ENCODE measurements at regions of chr2 and their contacts with region 1.

Region 1: DNA sequence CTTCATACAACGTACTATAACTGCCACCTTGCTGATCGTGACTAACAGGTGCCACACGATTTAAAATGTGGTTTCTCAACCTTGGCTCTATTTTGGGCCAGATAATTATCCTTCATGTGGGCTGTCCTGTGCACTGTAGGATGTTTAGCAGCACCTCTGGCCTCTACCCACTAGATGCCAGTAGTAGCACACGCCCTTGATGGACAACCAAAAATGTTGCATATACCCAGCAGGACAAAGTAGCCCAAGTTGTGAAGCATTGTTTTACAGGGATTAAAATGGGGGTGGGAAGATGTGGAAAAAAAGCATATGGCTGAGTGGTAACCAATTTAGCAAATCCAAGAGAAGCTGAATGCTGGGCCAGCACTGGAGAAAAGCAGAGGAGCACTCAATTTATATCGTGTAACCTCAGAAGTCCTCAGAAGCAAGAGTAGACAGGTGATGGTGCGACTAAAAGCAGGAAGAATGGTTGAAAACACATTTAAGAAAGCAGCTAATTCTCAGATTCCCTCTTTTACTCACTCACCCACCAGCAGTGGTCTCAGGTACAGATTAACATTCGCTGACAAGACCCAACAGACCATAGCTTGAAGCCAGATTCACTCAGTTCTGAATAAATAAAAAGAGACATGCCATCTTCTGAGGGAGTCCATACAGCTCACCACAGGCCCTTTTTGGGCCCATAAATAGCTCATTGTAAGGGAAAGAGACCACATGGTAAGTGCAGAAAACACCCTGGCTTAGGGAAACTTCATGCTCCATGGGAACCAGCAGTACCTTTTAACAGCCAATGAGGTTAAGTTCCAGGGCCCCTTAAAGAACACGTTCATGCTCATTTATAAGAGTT is 50.6 kb downstream of the RAPH1 start:
- DNase-seq: no peak
- ATAC-seq: no peak
- H3K4me3 Mint-ChIP-seq: no peak overlapping the region
- H3K27ac Mint-ChIP-seq: no peak overlapping the region
- H3K4me1 Mint-ChIP-seq: no peaks in the 10 kb centered on the region
- H3K27me3 Mint-ChIP-seq: peaks cover 1% of the 10 kb centered on the region
- CTCF ChIP-seq: no peak

Region 2: GRCh38 chr2:203782262-203782976 is 297.9 kb after region 1 on chr2:
- CTCF ChIA-PET with region 1: no interaction called
- POLR2A ChIA-PET with region 1: no interaction called
- intact Hi-C with region 1: loop called (anchors 1 kb)
- DNase-seq: no peak
- ATAC-seq: no peak
- H3K4me3 Mint-ChIP-seq: no peak overlapping the region
- H3K27ac Mint-ChIP-seq: no peak overlapping the region
- H3K4me1 Mint-ChIP-seq: no peaks in the 10 kb centered on the region
- H3K27me3 Mint-ChIP-seq: peaks cover 28% of the 10 kb centered on the region
- CTCF ChIP-seq: no peak

Region 3: DNA sequence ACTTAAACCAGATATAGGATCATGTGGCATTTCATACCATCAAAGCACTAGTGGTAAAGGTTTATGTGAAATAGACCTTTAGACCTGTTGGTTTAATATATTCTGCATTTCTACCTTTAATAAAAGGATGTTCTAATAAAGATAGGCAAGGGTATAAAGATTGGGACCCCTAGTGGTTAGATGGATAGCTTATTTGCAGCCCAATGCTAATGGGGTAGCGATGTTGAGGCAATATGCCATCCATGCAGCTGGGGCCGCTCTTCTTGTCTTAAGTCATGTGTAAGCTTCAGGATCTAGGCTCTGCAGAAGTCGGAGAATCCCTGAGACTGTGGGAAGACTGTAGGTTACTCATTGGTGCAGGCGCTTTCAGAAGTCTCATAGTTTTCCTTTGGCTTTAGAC is 567.0 kb after region 1 on chr2:
- CTCF ChIA-PET with region 1: no interaction called
- POLR2A ChIA-PET with region 1: no interaction called
- intact Hi-C with region 1: loop called (anchors 10 kb)
- DNase-seq: no peak
- ATAC-seq: no peak
- H3K4me3 Mint-ChIP-seq: no peak overlapping the region
- H3K27ac Mint-ChIP-seq: no peak overlapping the region
- H3K4me1 Mint-ChIP-seq: no peaks in the 10 kb centered on the region
- H3K27me3 Mint-ChIP-seq: peaks cover 6% of the 10 kb centered on the region
- CTCF ChIP-seq: no peak

Measured in activated B cell treated with CpG ODN at 0.5 μM for 24 hours (primary cell).